ENCODE measurements at regions of chr19 and their contacts with region 1.

Region 1: DNA sequence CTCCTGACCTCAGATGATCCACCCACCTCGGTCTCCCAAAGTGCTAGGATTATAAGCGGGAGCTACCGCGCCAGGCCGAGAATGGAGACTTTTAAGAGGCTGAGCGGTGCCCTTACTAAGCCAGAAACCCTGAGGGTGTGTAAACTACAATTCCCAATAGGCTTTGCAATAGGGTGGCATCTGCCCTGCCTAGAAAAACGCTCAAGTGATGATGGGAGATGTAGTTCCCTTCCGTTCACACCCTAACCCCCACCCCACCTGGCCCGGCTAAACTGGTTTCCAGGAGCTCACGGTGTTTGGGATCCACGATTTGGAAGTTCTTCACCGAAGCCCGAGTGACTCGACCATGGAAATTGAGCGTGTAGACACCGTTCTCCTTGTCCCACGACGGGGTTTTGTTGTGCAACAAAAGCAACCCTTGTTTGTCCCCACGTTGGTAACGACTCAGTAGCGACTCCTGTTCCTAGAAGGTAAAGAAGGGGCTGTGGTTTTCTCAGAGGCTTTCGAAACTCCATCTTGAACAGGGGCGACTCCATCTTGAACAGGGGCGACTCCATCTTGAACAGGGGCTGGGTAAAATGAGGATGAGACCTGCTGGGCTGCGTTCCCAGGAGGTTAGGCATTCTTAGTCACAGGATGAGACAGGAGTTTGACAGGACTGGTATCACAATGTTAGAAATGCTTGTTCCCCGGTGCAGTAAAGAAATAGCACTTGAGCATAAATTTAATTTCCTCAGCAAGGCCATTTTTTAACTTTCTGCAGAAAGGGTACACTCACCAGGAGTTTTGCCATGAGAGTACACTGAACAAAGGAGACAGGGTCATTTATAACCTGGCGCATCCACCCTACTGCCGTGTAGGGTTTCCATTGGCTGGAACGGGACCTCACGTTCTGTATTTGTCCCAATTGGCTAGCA is 9.8 kb downstream of the PPP1R15A start:
- DNase-seq: peak in 3 of 35 experiments; percentile 39 to 58 (median 41)
- ATAC-seq: peak; percentile 27 to 68 (median 65)
- H3K4me3 ChIP-seq: no peak overlapping the region
- H3K4me3 Mint-ChIP-seq: no peak overlapping the region
- H3K27ac ChIP-seq: no peak overlapping the region
- H3K27ac Mint-ChIP-seq: peak overlapping the region in 1 of 2 donors; percentile 11
- H3K4me1 ChIP-seq: no peaks in the 10 kb centered on the region
- H3K4me1 Mint-ChIP-seq: peaks cover 0 to 10% (median 7%) of the 10 kb centered on the region in 3 donors
- H3K27me3 ChIP-seq: no peaks in the 10 kb centered on the region
- H3K27me3 Mint-ChIP-seq: no peaks in the 10 kb centered on the region

Region 2: GRCh38 chr19:47805313-47805712 is 1076.7 kb before region 1 on chr19:
- CTCF ChIA-PET with region 1: no interaction called
- POLR2A ChIA-PET with region 1: no interaction called
- DNase-seq: no peak
- ATAC-seq: no peak
- H3K4me3 ChIP-seq: no peak overlapping the region
- H3K4me3 Mint-ChIP-seq: no peak overlapping the region
- H3K27ac ChIP-seq: no peak overlapping the region
- H3K27ac Mint-ChIP-seq: no peak overlapping the region
- H3K4me1 ChIP-seq: no peaks in the 10 kb centered on the region
- H3K4me1 Mint-ChIP-seq: no peaks in the 10 kb centered on the region
- H3K27me3 ChIP-seq: no peaks in the 10 kb centered on the region
- H3K27me3 Mint-ChIP-seq: no peaks in the 10 kb centered on the region

Region 3: DNA sequence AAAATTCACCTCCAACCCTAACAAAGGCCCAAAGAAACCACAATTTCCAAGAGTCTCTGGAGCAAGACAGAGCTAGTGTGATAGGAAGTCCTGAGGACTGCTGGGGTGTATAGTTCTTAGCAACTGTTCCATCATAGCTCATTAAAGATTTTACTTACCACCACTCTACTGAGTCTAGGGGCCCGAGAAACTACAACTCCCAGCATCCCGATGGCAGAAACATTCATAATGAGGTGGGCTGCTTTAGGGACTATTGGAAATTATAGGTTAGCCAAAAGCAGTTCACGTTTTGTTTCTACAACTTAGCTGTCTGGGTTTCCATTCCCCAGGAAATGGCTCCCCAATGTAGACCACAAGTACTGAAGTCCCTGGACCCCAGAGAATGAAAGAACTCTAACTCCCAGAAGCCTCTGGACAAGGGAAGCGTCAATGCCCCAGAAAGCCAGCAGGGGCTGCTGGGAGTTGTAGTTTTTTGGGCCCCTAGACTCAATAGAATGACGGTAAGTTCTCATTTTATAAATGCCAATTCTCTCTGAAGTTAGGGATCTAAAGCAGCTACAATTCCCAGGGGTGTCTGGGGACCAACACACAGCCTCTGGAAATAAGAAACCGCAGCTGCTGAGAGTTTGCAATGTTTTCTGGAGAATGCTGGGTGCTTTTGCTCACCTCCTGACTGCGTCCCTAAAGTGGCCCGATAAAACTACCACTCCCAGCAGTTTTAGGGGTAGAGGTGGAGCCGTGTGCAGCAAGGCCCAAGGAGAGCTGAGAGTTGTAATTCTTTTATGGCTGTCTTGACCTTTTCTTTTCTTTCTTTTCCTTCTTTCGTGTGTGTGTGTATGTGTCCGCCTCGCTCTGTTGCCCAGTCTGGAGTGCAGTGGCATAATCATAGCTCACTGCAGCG is 94.2 kb after region 1 on chr19:
- CTCF ChIA-PET with region 1: interaction called, 4 to 7 read pairs
- POLR2A ChIA-PET with region 1: interaction called, 5 to 12 read pairs
- DNase-seq: peak in 22 of 35 experiments; percentile 24 to 53 (median 42)
- ATAC-seq: peak; percentile 65 to 83 (median 76)
- H3K4me3 ChIP-seq: no peak overlapping the region
- H3K4me3 Mint-ChIP-seq: no peak overlapping the region
- H3K27ac ChIP-seq: no peak overlapping the region
- H3K27ac Mint-ChIP-seq: no peak overlapping the region
- H3K4me1 ChIP-seq: no peaks in the 10 kb centered on the region
- H3K4me1 Mint-ChIP-seq: peaks cover under 1% of the 10 kb centered on the region in 3 donors
- H3K27me3 ChIP-seq: no peaks in the 10 kb centered on the region
- H3K27me3 Mint-ChIP-seq: no peaks in the 10 kb centered on the region

Measured in T-cell (primary cell).